ENCODE measurements at regions of chr3 and their contacts with region 1.

Region 1: DNA sequence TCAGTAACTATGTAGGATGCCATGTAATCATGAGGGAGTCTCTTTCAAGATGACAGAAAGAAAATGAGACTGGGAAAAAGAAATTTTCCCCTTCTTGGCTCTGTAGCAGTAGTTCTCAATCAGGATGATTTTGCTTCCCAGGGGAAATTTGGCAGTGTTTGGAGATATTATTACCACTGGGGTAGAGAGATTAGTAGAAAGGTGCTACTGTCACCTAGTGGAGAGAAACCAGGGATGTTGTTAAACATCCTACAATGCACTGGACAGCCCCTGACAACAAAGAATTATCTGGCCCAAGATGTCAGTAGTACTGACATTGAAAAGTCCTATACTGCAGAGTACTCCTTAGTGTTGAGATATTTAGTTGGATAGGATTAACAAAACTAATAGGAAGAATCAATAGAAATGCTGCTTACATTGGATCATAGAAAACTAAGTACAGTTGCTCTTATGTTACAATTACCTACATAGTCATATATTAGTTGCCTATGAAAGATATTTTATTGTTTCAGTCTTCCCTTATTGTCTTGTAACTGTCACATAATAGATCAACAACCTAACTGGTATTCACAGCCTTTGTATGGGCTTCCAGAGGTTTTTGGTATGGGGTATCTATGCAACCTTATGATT is 433.3 kb downstream of the RAP2B start:
- DNase-seq: peak; percentile 32
- ATAC-seq: peak; percentile 92
- H3K4me3 ChIP-seq: no peak overlapping the region
- H3K27ac ChIP-seq: no peak overlapping the region
- H3K4me1 ChIP-seq: no peaks in the 10 kb centered on the region
- H3K27me3 ChIP-seq: no peaks in the 10 kb centered on the region
- CTCF ChIP-seq: peak; percentile 79; the same call in 1 of the 2 replicates

Region 2: GRCh38 chr3:152554980-152555379 is 1040.3 kb before region 1 on chr3:
- CTCF ChIA-PET with region 1: no interaction called
- POLR2A ChIA-PET with region 1: no interaction called
- in situ Hi-C with region 1: no loop called
- intact Hi-C with region 1: no loop called
- DNase-seq: no peak
- ATAC-seq: no peak
- H3K4me3 ChIP-seq: no peak overlapping the region
- H3K27ac ChIP-seq: no peak overlapping the region
- H3K4me1 ChIP-seq: no peaks in the 10 kb centered on the region
- H3K27me3 ChIP-seq: no peaks in the 10 kb centered on the region
- CTCF ChIP-seq: no peak

Region 3: DNA sequence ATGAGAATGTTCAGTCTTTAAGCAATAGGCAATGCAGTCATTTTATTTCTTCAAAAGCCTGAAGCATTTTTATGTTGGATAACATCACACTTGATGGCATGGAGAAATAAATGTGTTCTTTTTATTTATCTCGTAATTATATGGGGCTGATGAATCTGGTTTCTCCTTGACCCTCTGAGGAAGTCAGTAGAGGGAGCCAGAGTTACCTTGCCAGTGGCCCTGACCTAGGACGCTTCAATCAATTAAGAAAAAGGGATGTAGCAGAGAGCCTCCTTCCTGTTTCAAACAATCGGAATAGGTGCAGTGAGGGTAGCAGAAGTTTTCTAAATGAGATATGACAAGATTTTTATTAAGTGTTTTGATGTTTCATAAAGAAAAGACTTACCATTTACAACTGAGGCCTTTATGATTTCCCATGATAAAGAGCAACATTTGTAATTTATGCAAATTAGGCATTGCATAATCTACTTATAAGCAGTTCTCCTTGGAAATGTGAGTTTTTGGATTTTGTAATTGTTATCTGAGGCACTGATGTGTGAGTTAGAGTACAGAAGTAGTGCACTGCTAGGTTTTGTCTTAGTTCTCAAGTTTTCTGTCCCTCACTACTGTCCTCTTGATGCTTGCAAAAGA is 304.1 kb before region 1 on chr3:
- CTCF ChIA-PET with region 1: no interaction called
- POLR2A ChIA-PET with region 1: no interaction called
- in situ Hi-C with region 1: no loop called
- intact Hi-C with region 1: loop called (anchors 10 kb)
- DNase-seq: no peak
- ATAC-seq: peak; percentile 88
- H3K4me3 ChIP-seq: no peak overlapping the region
- H3K27ac ChIP-seq: no peak overlapping the region
- H3K4me1 ChIP-seq: no peaks in the 10 kb centered on the region
- H3K27me3 ChIP-seq: no peaks in the 10 kb centered on the region
- CTCF ChIP-seq: peak; percentile 81

Measured in Panc1 (cell line).